WTC11 (cell line): ENCODE measurements at regions of chr1 and their contacts with region 1.

Region 1: DNA sequence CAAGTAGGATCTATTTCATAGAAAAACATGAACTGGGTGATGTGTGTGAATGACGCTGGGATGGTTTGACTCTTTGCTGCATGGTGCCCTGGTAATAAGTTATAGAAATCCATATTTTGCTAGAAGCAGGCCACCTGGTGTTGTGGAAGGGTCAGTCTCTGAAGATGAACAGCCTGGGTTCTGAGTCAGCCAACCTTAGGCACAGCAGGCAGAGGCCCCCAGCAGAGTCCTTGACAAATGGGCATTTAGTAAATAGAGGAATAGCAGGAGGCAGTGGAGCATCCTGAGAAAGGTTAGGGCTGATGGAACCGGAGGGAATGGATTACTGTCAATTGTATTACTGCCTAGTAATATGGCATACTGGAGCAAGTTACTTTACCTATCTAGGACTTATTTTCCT is 20.9 kb downstream of the FGGY start:
- DNase-seq: no peak
- ATAC-seq: no peak
- H3K4me3 Mint-ChIP-seq: no peak overlapping the region
- H3K27ac Mint-ChIP-seq: no peak overlapping the region
- H3K4me1 Mint-ChIP-seq: peaks cover 28% of the 10 kb centered on the region
- H3K27me3 Mint-ChIP-seq: no peaks in the 10 kb centered on the region
- CTCF ChIP-seq: no peak

Region 2: GRCh38 chr1:59266180-59266926 is 51.4 kb before region 1 on chr1:
- CTCF ChIA-PET with region 1: no interaction called
- POLR2A ChIA-PET with region 1: no interaction called
- DNase-seq: no peak
- ATAC-seq: no peak
- H3K4me3 Mint-ChIP-seq: no peak overlapping the region
- H3K27ac Mint-ChIP-seq: no peak overlapping the region
- H3K4me1 Mint-ChIP-seq: no peaks in the 10 kb centered on the region
- H3K27me3 Mint-ChIP-seq: no peaks in the 10 kb centered on the region
- CTCF ChIP-seq: no peak

Region 3: GRCh38 chr1:59699227-59699847 is 381.6 kb after region 1 on chr1:
- CTCF ChIA-PET with region 1: interaction called, 11 read pairs
- POLR2A ChIA-PET with region 1: no interaction called
- DNase-seq: no peak
- ATAC-seq: peak; percentile 43; the same call in 1 of the 2 replicates
- H3K4me3 Mint-ChIP-seq: no peak overlapping the region
- H3K27ac Mint-ChIP-seq: no peak overlapping the region
- H3K4me1 Mint-ChIP-seq: peaks cover 28% of the 10 kb centered on the region
- H3K27me3 Mint-ChIP-seq: no peaks in the 10 kb centered on the region
- CTCF ChIP-seq: peak; percentile 92